ENCODE measurements at regions of chr9 and their contacts with region 1.

Region 1: DNA sequence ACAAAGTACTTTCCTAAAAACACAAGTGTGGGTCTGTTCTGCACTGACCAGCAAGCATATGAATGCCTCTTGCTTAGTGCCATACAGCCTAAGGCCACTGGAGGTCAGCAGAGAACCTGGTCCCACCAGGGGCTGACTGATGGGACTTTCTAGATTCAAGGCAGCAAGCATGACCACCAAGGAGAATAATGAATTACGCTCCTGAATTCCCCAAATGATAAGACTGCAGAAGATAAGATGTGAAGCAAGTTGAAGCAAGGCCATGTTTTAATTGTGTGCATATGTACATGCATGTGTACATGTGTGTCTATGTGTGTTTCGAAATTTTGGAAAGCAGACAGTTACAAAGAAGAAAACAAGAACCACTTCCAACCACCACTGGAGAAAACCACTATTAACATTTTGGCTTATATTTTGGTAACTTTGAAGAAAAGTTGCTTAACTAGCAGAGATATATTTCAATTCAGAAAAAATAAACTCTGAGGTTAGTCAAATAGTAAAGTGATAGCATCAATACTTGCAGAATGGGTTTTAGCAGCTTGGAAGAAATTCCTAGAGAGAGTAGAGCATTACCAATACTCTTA is 70.5 kb downstream of the ERP44 start:
- DNase-seq: peak; percentile 61 to 79
- ATAC-seq: peak; percentile 86 to 98 (median 97)
- H3K4me3 ChIP-seq: no peak overlapping the region
- H3K27ac ChIP-seq: no peak overlapping the region
- H3K4me1 ChIP-seq: peaks cover under 1% of the 10 kb centered on the region
- H3K27me3 ChIP-seq: no peaks in the 10 kb centered on the region
- CTCF ChIP-seq: peak; percentile 96

Region 2: DNA sequence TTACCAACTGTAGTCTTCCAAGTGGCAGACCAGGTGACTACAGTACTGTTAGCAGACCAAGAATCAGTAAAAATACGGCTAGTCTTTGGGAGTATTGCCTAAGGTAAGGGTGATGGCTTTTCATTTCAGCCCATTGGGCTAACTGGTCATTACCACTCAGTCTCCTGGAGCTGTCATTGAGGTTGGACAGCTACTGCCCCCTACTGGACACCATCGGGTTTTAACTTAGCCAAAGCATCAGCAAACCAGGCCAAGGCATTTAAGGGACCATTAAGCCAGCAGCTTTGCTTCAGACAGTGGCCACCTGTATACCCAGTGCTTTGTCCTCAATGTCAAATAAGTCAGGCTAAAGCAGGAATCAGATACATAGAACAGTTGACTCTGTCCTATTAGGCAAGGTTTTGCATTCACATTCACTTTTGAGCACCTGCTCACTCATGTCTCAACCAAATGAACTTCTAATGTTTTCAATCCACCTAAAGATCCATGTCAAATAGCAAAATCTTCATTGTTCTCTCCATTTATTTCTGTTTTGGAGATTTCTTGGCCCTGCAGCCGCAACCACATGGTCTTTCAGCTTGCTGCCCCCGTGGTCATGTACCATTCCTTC is 188.0 kb after region 1 on chr9:
- intact Hi-C with region 1: loop called (anchors 2 kb)
- DNase-seq: peak; percentile 37 to 55
- ATAC-seq: peak; percentile 43 to 89 (median 82)
- H3K4me3 ChIP-seq: no peak overlapping the region
- H3K27ac ChIP-seq: no peak overlapping the region
- H3K4me1 ChIP-seq: peaks cover 2% of the 10 kb centered on the region
- H3K27me3 ChIP-seq: no peaks in the 10 kb centered on the region
- CTCF ChIP-seq: peak; percentile 63

Region 3: GRCh38 chr9:100222674-100223073 is 194.4 kb after region 1 on chr9:
- intact Hi-C with region 1: loop called in 1 of 2 experiments (anchors 2 kb)
- DNase-seq: no peak
- ATAC-seq: peak in 1 of 4 donors; percentile 38
- H3K4me3 ChIP-seq: no peak overlapping the region
- H3K27ac ChIP-seq: no peak overlapping the region
- H3K4me1 ChIP-seq: no peaks in the 10 kb centered on the region
- H3K27me3 ChIP-seq: no peaks in the 10 kb centered on the region
- CTCF ChIP-seq: peak; percentile 27

Region 4: DNA sequence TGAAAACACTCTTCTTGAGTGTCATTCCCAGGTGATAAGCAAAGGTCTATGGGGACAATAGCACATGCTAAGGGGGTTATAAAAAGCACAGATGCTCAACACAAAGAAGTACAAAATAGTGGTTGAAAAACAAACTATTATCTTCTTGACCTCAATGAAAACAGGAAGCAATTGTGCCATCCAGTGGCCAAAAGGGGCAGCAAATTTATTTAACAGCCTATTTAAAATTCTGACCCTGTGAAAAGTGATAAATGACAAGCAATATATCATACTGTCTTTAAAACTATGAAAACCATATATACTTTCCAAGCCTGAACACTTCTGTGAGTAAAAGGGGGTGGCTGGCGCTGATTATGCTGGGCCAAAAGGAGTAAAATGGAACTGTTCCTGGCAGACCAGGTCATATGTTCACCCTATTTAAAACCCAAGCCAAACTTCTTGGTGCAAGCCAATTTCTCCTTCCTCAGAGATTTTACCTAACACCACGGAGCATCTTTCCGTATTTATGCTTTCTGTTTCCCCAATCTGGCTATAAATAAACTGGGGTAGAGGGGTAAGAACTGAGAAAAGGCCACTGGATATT is 294.8 kb after region 1 on chr9:
- intact Hi-C with region 1: loop called (anchors 5 to 10 kb)
- DNase-seq: no peak
- ATAC-seq: peak in 2 of 4 donors; percentile 46 to 69
- H3K4me3 ChIP-seq: no peak overlapping the region
- H3K27ac ChIP-seq: no peak overlapping the region
- H3K4me1 ChIP-seq: no peaks in the 10 kb centered on the region
- H3K27me3 ChIP-seq: no peaks in the 10 kb centered on the region
- CTCF ChIP-seq: peak; percentile 59

Region 5: DNA sequence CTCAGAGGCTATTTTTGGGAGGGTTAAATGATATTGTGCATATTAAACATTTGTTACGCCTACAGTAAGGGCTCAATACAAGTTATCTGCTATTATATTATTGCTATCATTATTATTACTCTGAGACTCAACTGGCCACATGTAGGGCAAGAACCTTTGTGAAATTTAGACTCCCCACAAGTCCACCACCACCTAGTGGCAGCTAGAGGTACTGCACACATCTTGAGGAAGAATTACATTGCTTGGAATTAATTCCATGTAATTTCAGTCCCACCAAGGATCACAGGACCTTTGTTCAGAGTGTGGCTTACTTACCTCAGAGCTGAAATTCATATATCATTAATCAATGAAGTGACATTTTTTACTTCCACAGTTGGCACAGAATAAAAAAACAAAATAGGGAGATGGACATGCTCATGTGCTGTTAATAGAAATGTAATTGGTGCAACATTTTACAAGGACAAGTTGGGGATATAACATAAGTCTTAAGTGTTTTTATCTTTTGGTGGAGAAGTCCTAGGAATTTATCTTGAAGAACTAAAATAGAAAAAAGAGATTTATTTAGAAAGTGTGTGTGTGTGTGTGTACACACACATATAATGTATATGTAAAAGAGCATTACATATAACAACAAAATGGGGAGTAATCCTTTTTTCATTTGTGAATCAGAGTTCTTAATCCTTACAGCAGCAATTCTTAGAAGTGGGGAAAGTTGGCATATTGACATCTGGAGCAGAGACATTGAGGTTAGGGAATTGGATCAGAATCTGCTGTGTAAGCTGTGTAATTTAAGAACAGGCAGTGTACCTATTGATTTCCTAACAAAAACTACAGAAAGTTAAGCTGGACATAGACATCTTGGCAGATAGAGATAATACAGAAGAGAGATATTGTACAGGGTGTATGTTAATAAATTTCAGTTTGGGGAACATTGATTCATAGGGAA is 409.8 kb after region 1 on chr9:
- intact Hi-C with region 1: loop called in 1 of 2 experiments (anchors 10 kb)
- DNase-seq: peak; percentile 53 to 60
- ATAC-seq: peak in 3 of 4 donors; percentile 33 to 57 (median 44)
- H3K4me3 ChIP-seq: no peak overlapping the region
- H3K27ac ChIP-seq: peak overlapping the region; percentile 86
- H3K4me1 ChIP-seq: peaks cover 30% of the 10 kb centered on the region
- H3K27me3 ChIP-seq: no peaks in the 10 kb centered on the region
- CTCF ChIP-seq: peak; percentile 94

Region 6: GRCh38 chr9:100589582-100589981 is 561.3 kb after region 1 on chr9:
- intact Hi-C with region 1: loop called in 1 of 2 experiments (anchors 10 kb)
- DNase-seq: no peak
- ATAC-seq: no peak
- H3K4me3 ChIP-seq: no peak overlapping the region
- H3K27ac ChIP-seq: peak overlapping the region; percentile 74
- H3K4me1 ChIP-seq: peaks cover 14% of the 10 kb centered on the region
- H3K27me3 ChIP-seq: no peaks in the 10 kb centered on the region
- CTCF ChIP-seq: no peak

Measured in psoas muscle (tissue), 8 donors.